ENCODE measurements at regions of chr1 and their contacts with region 1.

Region 1: DNA sequence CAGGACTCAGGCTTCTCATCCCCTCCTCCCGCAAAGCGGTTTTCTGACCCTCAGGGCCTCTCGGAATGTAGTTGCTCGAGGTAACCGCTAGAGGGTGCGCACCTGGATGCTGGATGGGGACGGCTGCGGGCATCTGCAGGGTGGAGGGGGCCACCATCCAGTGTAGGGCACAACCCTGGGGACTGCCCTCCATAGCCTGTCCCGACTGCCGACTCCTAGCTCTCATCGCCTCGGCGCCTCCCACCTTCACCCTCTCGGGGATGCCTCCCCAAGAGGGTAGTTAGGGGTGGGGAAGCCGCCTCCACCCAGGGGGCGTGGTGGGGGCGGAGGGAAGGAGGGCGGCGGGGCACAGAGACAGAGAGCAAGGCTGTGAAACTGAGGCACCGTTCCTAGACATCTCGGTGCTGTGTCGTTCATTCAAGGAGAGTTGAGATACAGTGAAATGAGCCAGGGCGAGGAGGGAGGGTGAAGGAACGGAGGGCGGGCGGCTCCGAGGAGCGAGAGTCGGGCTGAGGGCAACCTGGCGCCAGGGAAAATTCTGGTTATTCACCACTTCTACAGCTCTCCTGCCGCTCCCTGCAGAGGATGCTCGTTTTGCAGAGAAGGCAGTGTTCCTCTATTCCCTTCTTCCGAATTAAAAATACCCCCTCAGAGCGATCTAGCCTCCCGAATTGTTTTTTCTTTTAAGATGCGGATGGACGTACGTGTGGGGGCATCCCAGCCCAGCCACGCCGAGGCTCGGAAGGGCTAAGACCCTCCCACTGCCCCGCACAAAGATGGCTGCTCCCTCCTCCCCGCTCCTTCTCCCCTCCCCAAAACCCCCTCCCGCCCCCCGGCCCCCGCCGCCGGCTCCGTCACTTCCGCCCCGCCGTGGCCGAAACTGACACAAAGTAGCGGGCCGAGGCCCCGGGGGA is at the start of gene ATP8B2:
- DNase-seq: no peak
- H3K4me3 ChIP-seq: peak within 1 kb of the TSS; percentile 76
- H3K27me3 ChIP-seq: peaks cover 6% of the 10 kb centered on the region
- CTCF ChIP-seq: peak; percentile 94
- polyA plus RNA-seq, gene ATP8B2: 48.3 and 73.3 TPM in 2 replicates

Region 2: DNA sequence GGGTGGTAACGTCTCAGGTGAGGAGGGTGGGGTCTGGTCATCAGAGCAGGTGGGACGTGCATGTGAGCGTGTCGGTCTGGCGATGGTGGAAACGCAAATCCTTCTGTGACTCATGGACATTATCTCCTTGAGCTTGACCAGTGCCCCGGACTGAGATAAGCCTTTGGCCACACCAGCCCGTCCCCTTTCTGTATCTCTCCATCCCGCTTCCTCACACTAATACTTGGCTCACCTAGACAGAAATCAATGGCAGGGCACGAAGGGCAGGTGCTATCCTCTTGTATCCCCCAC is 11.9 kb before region 1 on chr1:
- CTCF ChIA-PET with region 1: interaction called, 18 read pairs
- POLR2A ChIA-PET with region 1: no interaction called
- DNase-seq: no peak
- H3K4me3 ChIP-seq: no peak overlapping the region
- H3K27me3 ChIP-seq: no peaks in the 10 kb centered on the region
- CTCF ChIP-seq: no peak

Region 3: DNA sequence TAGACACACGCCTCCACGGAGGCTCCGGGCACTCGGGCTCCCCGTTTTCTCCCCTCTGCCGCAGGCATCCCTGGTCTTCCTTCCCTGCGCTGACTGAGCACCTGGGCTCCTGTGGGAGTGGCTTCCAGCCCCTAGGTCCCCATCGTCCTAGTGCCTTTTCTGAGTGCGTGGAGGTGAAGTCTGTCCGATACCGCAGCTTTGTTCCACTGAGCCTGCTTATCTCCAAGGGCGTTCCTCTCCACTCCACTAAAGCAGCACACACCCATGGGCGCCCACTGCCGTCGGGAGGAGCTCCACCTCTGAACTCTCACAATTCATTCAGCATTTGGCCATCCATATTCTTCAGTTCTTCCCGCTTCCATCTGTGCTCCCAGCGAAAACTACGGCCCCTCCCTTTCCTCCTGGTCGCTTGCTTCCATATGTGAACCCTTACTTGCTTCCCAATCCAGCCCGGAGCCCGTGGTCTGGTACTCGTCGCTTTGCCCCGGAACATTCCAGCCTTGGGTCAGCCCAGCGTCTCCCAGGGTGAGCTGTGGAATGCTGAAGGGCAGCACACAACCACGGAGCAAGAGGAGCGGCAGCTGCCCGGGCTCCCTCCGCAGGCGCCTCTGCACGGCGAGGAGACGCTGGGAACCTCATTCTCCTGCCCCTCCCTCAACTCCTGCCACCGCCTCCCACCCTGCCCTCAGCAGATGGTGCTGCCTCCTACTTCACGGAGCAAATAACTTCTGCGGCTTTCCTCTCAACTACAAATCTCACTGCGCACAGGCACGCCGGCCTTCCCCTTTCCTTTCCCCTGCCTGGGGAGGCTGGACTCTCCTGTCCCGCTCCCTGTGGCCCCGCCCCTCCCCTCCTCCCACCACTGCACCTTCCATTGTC is 27.9 kb after region 1 on chr1:
- CTCF ChIA-PET with region 1: interaction called, 10 read pairs
- POLR2A ChIA-PET with region 1: no interaction called
- DNase-seq: no peak
- H3K4me3 ChIP-seq: peak overlapping the region; percentile 37
- H3K27me3 ChIP-seq: peaks cover 3% of the 10 kb centered on the region; the same call in 1 of the 2 replicates
- CTCF ChIP-seq: peak; percentile 12; the same call in 1 of the 2 replicates

Region 4: DNA sequence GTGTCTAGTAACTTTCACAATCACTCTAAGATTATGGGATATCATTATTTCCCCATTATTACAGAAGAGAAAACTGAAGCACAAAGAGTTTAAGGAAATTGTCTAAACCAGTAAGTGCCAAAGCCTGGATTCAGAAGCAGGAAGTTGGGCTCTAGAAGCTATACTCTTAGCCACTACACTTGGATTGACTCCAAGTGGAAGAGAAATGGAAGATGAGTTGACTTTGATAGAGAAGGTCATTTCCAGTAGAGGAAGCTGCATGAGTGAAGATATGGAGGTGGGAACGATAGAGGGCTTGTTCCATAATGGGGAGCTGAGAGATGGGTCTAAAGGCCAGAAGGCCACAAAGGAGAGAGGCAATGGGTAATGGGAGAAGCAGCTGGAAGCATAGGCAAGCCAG is 165.4 kb after region 1 on chr1:
- CTCF ChIA-PET with region 1: no interaction called
- POLR2A ChIA-PET with region 1: interaction called, 15 read pairs
- DNase-seq: no peak
- H3K4me3 ChIP-seq: no peak overlapping the region
- H3K27me3 ChIP-seq: peaks cover 30% of the 10 kb centered on the region
- CTCF ChIP-seq: no peak